Activated CD4-positive, alpha-beta memory T cell treated with anti-CD3 and anti-CD28 coated beads for 36 hours (primary cell): ENCODE measurements at regions of chr7 and their contacts with region 1.

Region 1: GRCh38 chr7:65981965-65982792 is at the start of gene GUSB:
- DNase-seq: peak; percentile 93
- H3K4me3 Mint-ChIP-seq: peak within 1 kb of the TSS; percentile 86
- H3K27ac Mint-ChIP-seq: peak within 1 kb of the TSS; percentile 90
- H3K4me1 Mint-ChIP-seq: peaks cover 11% of the 10 kb centered on the region
- H3K27me3 Mint-ChIP-seq: no peaks in the 10 kb centered on the region
- total RNA-seq, gene GUSB: 53.1 to 56.6 TPM

Region 2: DNA sequence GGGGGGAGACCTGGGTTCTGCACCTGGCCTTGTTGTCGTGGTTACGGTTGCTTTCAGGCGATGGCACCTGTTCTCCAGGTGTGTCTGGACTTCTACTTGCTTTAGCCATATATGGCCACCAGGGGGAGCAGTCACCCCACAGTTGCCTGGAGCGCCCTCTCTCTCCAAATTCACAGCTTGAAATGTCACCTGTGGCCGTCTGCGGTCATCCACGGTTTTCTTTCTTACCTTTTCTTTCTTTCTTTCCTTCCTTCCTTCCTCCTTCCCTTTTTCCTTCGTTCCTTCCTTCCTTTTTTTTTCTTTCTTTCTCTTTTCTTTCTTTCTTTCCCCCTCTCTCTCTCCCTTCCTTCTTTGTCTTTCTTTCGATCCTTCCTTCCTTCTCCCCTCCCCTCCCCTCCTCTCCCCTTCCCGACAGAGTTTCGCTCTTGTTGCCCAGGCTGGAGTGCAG is 259.8 kb before region 1 on chr7:
- CTCF ChIA-PET with region 1: no interaction called
- POLR2A ChIA-PET with region 1: no interaction called
- intact Hi-C with region 1: loop called (anchors 10 kb)
- DNase-seq: peak; percentile 78
- H3K4me3 Mint-ChIP-seq: no peak overlapping the region
- H3K27ac Mint-ChIP-seq: no peak overlapping the region
- H3K4me1 Mint-ChIP-seq: no peaks in the 10 kb centered on the region
- H3K27me3 Mint-ChIP-seq: no peaks in the 10 kb centered on the region

Region 3: DNA sequence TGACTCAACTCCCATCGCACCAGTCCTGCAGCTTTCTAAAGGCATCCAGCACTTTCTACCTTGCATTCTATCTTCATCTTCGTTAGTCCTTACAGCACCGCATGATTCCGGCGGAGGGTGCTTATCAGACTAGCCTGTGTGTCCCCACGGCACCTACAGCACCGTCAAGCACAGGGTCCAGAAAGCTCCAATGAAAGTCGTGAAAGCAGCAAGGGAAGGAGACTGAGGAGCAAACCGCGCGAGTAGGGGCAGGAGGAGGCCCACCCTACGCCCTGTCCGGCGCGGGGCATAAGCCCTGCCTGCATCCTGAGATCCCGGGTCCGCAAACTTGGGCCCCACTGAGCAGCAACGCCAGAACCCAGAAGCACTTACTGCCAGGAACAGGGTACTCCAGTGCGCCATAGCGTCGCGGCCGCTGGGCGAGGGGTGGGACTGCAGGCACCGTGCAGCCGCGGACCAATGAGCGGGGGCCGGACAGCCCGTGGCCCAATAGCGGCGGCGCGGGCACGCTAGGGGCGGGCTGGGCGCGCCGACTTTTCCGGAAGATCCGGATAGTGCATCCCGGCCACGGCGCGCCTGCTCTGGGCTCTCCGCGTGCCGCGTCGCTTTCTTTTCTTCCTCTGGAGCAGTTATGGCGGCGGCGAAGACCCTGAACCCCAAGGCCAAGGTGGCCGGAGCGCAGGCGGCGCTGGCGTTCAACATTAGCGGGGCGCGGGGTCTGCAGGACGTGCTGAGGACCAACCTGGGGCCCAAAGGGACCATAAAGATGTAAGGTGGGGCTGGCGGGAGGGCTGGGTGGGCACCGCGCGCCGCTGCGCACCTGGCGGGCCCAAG is 231.5 kb before region 1 on chr7:
- CTCF ChIA-PET with region 1: interaction called, 3 read pairs
- POLR2A ChIA-PET with region 1: no interaction called
- intact Hi-C with region 1: loop called (anchors 2 kb)
- DNase-seq: peak; percentile 92
- H3K4me3 Mint-ChIP-seq: peak overlapping the region; percentile 96
- H3K27ac Mint-ChIP-seq: peak overlapping the region; percentile 98
- H3K4me1 Mint-ChIP-seq: peaks cover 29% of the 10 kb centered on the region
- H3K27me3 Mint-ChIP-seq: no peaks in the 10 kb centered on the region

Region 4: GRCh38 chr7:65872776-65873581 is 109.2 kb before region 1 on chr7 and contains the start of gene VKORC1L1:
- CTCF ChIA-PET with region 1: no interaction called
- POLR2A ChIA-PET with region 1: no interaction called
- intact Hi-C with region 1: loop called (anchors 2 kb)
- DNase-seq: peak; percentile 97
- H3K4me3 Mint-ChIP-seq: peak within 1 kb of the TSS; percentile 85
- H3K27ac Mint-ChIP-seq: no peak within 1 kb of the TSS
- H3K4me1 Mint-ChIP-seq: peaks cover 7% of the 10 kb centered on the region
- H3K27me3 Mint-ChIP-seq: no peaks in the 10 kb centered on the region
- total RNA-seq, gene VKORC1L1: 14.9 to 16.1 TPM

Region 5: DNA sequence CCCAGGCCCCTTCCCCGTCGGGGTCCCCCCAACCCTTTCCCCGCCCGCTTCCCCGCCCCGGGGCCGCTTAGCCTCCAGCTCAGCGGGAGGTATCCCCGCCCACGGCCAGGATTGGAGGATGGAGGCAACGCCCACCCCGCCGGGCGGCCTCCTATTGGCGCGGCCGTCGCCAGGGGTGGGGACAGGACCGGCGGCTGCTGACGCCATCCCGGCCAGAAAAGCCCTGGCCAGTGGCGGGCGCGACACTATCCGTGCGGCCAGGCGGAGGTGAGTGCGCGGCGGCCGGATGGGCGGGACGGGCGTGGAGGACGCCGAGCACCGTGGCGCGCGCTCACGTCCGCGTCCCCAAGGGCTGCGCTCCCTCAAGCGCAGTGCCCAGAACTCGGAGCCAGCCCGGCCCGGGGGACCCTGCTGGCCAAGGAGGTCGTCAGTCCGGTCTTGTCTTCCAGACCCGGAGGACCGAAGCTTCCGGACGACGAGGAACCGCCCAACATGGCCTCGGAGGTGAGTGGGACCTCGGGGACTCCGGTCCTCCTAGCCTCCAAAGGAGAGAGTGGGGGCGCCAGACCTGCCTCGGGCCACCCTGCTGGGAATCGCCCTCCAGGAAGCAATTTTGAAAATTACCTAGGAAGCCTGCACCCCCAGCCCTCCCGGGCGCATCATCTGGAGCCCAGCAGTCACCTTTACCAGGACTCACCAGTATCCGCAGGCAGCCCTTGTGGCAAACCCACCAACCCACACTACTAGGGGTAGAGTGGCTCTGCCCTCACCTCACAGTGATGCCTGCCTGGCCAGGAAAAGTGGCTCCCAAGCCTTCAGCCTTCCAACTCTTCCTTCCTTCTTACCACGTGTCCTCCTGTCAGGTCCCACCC is 93.6 kb after region 1 on chr7 and contains the start of gene ASL:
- CTCF ChIA-PET with region 1: no interaction called
- POLR2A ChIA-PET with region 1: interaction called, 4 read pairs
- intact Hi-C with region 1: loop called (anchors 5 kb)
- DNase-seq: peak; percentile 93
- H3K4me3 Mint-ChIP-seq: peak within 1 kb of the TSS; percentile 83
- H3K27ac Mint-ChIP-seq: no peak within 1 kb of the TSS
- H3K4me1 Mint-ChIP-seq: peaks cover 13% of the 10 kb centered on the region
- H3K27me3 Mint-ChIP-seq: no peaks in the 10 kb centered on the region
- total RNA-seq, gene ASL: 26.2 to 26.8 TPM

Region 6: GRCh38 chr7:66114793-66115649 is 132.8 kb after region 1 on chr7 and contains the start of gene CRCP:
- CTCF ChIA-PET with region 1: no interaction called
- POLR2A ChIA-PET with region 1: no interaction called
- intact Hi-C with region 1: loop called (anchors 2 kb)
- DNase-seq: peak; percentile 88
- H3K4me3 Mint-ChIP-seq: peak within 1 kb of the TSS; percentile 97
- H3K27ac Mint-ChIP-seq: peak within 1 kb of the TSS; percentile 96
- H3K4me1 Mint-ChIP-seq: peaks cover 44% of the 10 kb centered on the region
- H3K27me3 Mint-ChIP-seq: no peaks in the 10 kb centered on the region
- total RNA-seq, gene CRCP: 19.3 to 19.6 TPM

Region 7: DNA sequence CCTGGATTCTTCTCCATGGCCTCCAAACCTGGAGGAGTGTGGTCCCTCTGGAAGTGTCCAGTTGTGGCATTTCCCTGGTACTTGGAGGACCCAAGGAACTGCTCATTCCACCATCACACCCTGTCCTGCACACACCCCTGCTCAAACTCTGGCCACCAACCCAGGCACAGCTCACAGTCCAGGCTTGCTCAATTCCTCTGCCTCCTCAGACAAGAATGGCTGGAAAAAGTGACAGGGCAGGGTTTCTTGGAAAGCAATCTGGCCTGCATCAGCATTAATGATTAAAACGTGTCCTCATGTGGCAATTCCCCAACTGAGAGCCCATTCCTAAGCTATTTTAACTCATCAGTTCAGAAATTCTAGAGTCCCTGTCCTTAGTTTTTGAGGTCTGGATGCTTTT is 205.7 kb after region 1 on chr7:
- CTCF ChIA-PET with region 1: no interaction called
- POLR2A ChIA-PET with region 1: no interaction called
- intact Hi-C with region 1: no loop called
- DNase-seq: no peak
- H3K4me3 Mint-ChIP-seq: no peak overlapping the region
- H3K27ac Mint-ChIP-seq: no peak overlapping the region
- H3K4me1 Mint-ChIP-seq: no peaks in the 10 kb centered on the region
- H3K27me3 Mint-ChIP-seq: peaks cover 2% of the 10 kb centered on the region

Region 8: DNA sequence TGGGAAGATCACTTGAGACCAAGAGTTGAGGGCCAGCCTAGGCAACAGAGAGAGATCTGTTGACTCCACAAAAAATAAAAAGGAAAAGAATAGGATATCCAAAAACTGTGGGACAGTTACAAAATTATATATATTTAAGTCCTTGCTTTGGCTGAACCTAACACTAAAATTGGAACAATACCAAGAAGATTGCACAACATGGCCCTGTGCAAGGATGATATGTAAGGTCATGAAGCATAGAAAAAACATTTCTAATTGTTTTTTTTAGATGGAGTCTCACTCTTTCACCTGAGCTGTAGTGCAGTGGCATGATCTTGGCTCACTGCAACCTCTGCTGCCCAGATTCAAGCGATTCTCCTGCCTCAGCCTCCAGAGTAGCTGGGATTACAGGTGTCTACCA is 362.0 kb after region 1 on chr7:
- CTCF ChIA-PET with region 1: no interaction called
- POLR2A ChIA-PET with region 1: no interaction called
- intact Hi-C with region 1: no loop called
- DNase-seq: no peak
- H3K4me3 Mint-ChIP-seq: no peak overlapping the region
- H3K27ac Mint-ChIP-seq: no peak overlapping the region
- H3K4me1 Mint-ChIP-seq: no peaks in the 10 kb centered on the region
- H3K27me3 Mint-ChIP-seq: peaks cover 1% of the 10 kb centered on the region

Region 9: GRCh38 chr7:66493235-66494181 is 511.3 kb after region 1 on chr7:
- CTCF ChIA-PET with region 1: no interaction called
- POLR2A ChIA-PET with region 1: no interaction called
- intact Hi-C with region 1: loop called (anchors 5 kb)
- DNase-seq: peak; percentile 97
- H3K4me3 Mint-ChIP-seq: peak overlapping the region; percentile 85
- H3K27ac Mint-ChIP-seq: peak overlapping the region; percentile 91
- H3K4me1 Mint-ChIP-seq: peaks cover 13% of the 10 kb centered on the region
- H3K27me3 Mint-ChIP-seq: no peaks in the 10 kb centered on the region